ENCODE measurements at regions of chr3 and their contacts with region 1.

Region 1: GRCh38 chr3:66138336-66139313 is 82.2 kb upstream of the SLC25A26 start:
- DNase-seq: peak; percentile 14
- H3K4me3 ChIP-seq: no peak overlapping the region
- H3K27ac ChIP-seq: no peak overlapping the region
- H3K4me1 ChIP-seq: no peaks in the 10 kb centered on the region
- CTCF ChIP-seq: peak; percentile 73

Region 2: DNA sequence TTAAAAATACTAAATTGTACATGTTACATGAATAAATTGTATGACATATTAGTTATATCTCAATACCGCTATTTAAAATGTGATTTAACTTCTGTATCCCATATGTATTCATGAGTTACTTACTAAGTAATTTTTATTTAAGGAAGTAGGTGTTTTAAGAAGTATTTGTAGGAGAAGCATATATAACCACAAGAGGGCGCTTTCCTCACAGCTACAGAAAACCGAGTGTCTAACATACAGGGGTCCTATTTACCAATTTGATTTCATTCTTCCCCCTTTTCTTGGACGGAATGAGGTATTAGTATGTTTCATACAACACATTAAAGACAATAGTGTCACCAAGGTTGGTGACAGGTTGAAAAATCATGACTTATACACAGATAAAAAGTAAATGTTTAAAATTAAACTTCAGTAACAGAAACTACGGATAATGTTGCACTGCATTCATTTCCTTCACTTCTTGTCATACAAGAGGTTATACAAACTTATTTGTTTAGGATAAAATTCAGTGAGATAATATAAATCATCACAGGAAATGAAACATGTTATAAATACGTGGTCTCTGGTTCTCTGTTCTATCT is 353.5 kb before region 1 on chr3:
- CTCF ChIA-PET with region 1: no interaction called
- POLR2A ChIA-PET with region 1: no interaction called
- intact Hi-C with region 1: loop called (anchors 5 kb)
- DNase-seq: peak; percentile 57
- H3K4me3 ChIP-seq: no peak overlapping the region
- H3K27ac ChIP-seq: no peak overlapping the region
- H3K4me1 ChIP-seq: no peaks in the 10 kb centered on the region
- CTCF ChIP-seq: peak; percentile 93

Region 3: GRCh38 chr3:66442254-66443117 is 303.9 kb after region 1 on chr3:
- CTCF ChIA-PET with region 1: no interaction called
- POLR2A ChIA-PET with region 1: no interaction called
- intact Hi-C with region 1: no loop called
- DNase-seq: no peak
- H3K4me3 ChIP-seq: no peak overlapping the region
- H3K27ac ChIP-seq: no peak overlapping the region
- H3K4me1 ChIP-seq: peaks cover 34% of the 10 kb centered on the region
- CTCF ChIP-seq: no peak

Measured in OCI-LY7 (cell line).